Caco-2 (cell line): ENCODE measurements at regions of chr20 and their contacts with region 1.

Region 1: DNA sequence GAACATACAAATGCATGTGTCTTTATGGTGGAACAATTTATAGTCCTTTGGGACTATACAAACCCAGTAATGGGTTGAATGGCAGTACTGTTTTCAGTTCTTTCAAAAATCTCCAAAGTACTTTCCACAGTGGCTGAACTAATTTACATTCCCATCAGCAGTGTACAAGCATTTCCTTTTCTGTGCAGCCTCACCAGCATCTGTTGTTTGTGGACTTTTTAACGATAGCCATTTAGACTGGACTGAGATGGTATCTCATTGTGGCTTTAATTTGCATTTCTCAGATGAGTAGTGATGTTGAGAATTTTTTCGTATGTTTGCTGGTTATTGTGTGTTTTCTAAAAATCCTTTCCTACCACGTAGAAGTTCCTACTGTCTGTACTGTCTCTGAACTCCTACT is 327.2 kb upstream of the ZFP64 start:
- DNase-seq: no peak
- H3K4me3 ChIP-seq: no peak overlapping the region
- H3K4me3 Mint-ChIP-seq: no peak overlapping the region
- H3K27ac Mint-ChIP-seq: no peak overlapping the region
- H3K4me1 ChIP-seq: no peaks in the 10 kb centered on the region
- H3K4me1 Mint-ChIP-seq: no peaks in the 10 kb centered on the region
- H3K27me3 ChIP-seq: no peaks in the 10 kb centered on the region
- H3K27me3 Mint-ChIP-seq: peaks cover 10% of the 10 kb centered on the region
- CTCF ChIP-seq: no peak

Region 2: GRCh38 chr20:52461582-52461981 is 57.2 kb before region 1 on chr20:
- CTCF ChIA-PET with region 1: no interaction called
- POLR2A ChIA-PET with region 1: no interaction called
- intact Hi-C with region 1: no loop called
- DNase-seq: no peak
- H3K4me3 ChIP-seq: no peak overlapping the region
- H3K4me3 Mint-ChIP-seq: no peak overlapping the region
- H3K27ac Mint-ChIP-seq: no peak overlapping the region
- H3K4me1 ChIP-seq: no peaks in the 10 kb centered on the region
- H3K4me1 Mint-ChIP-seq: no peaks in the 10 kb centered on the region
- H3K27me3 ChIP-seq: peaks cover 1% of the 10 kb centered on the region; the same call in 1 of the 2 replicates
- H3K27me3 Mint-ChIP-seq: peaks cover 24% of the 10 kb centered on the region
- CTCF ChIP-seq: no peak

Region 3: DNA sequence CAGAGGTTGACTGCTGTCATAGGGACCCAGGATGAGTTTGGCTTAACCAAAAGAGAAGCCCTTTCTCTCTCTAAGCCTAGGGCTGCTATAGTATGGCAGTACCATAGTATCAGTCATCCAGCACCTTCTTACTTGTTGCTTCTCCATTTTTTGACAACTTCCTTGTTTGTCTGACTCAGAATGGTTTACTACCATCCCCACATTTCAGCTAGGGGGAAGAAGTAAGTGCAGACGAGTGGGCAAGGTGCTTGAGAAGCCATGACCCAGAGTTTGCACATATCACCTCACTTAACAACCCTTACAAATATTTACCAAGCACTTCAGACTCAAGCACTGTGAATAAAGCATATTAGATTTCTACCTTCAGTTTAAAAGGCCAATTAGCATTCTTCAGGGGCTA is 163.5 kb after region 1 on chr20:
- CTCF ChIA-PET with region 1: no interaction called
- POLR2A ChIA-PET with region 1: no interaction called
- intact Hi-C with region 1: no loop called
- DNase-seq: no peak
- H3K4me3 ChIP-seq: no peak overlapping the region
- H3K4me3 Mint-ChIP-seq: no peak overlapping the region
- H3K27ac Mint-ChIP-seq: no peak overlapping the region
- H3K4me1 ChIP-seq: no peaks in the 10 kb centered on the region
- H3K4me1 Mint-ChIP-seq: no peaks in the 10 kb centered on the region
- H3K27me3 ChIP-seq: no peaks in the 10 kb centered on the region
- H3K27me3 Mint-ChIP-seq: peaks cover 19% of the 10 kb centered on the region
- CTCF ChIP-seq: no peak

Region 4: GRCh38 chr20:52847029-52847660 is 328.4 kb after region 1 on chr20:
- CTCF ChIA-PET with region 1: no interaction called
- POLR2A ChIA-PET with region 1: no interaction called
- intact Hi-C with region 1: loop called (anchors 10 kb)
- DNase-seq: no peak
- H3K4me3 ChIP-seq: no peak overlapping the region
- H3K4me3 Mint-ChIP-seq: no peak overlapping the region
- H3K27ac Mint-ChIP-seq: no peak overlapping the region
- H3K4me1 ChIP-seq: peaks cover under 1% of the 10 kb centered on the region; the same call in 1 of the 2 replicates
- H3K4me1 Mint-ChIP-seq: no peaks in the 10 kb centered on the region
- H3K27me3 ChIP-seq: no peaks in the 10 kb centered on the region
- H3K27me3 Mint-ChIP-seq: no peaks in the 10 kb centered on the region
- CTCF ChIP-seq: no peak